Endothelial cell of umbilical vein (primary cell): ENCODE measurements at regions of chr10 and their contacts with region 1.

Region 1: GRCh38 chr10:114550756-114551635 is 107.1 kb downstream of the ABLIM1 start:
- DNase-seq: peak; percentile 93
- H3K4me3 ChIP-seq: no peak overlapping the region
- H3K27ac ChIP-seq: no peak overlapping the region
- H3K4me1 ChIP-seq: peaks cover 11% of the 10 kb centered on the region
- H3K27me3 ChIP-seq: no peaks in the 10 kb centered on the region
- CTCF ChIP-seq: peak in 1 of 2 donors; percentile 15
- POLR2A ChIP-seq: no peak

Region 2: DNA sequence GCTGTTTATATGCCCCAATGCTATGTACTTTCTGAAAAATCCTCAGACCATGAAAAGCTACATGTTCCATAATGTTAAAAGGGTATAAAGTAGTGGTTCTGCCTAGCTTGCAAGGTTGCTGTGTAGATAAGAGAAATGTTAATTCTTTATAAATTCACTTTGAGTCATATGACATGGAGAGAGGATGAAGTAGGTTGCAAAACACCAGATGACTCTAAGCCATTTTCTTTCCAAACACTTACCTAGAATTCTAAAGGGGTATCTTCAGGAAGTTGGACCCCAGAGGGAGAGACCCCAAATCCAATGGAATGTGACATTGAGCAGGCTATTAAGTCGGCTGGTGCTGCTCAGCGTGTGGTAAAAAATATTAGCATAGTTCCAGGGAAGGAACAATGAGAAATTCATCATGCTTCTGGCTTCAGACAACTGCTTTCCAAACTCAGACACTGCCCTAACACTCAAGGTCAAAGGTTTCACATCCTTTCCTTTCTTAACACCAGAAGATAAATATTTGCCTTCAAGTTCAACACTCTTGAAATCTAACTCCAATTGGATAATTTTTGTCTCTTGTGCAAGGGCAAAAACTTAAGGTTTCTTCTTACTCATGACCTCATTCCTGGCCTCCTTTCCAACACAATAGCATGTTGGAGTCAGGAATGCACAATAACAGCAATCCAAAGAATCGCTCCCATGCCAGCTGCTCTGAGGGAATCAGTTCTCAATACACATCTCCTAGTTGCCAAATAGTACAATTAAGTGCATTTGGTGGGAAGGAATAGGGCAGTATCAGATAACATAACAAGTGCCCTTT is 46.0 kb before region 1 on chr10:
- CTCF ChIA-PET with region 1: no interaction called
- POLR2A ChIA-PET with region 1: no interaction called
- dilution Hi-C with region 1: no loop called
- intact Hi-C with region 1: loop called (anchors 2 kb)
- DNase-seq: peak; percentile 99
- H3K4me3 ChIP-seq: no peak overlapping the region
- H3K27ac ChIP-seq: peak overlapping the region; percentile 76
- H3K4me1 ChIP-seq: peaks cover 48% of the 10 kb centered on the region
- H3K27me3 ChIP-seq: no peaks in the 10 kb centered on the region
- CTCF ChIP-seq: no peak
- POLR2A ChIP-seq: no peak

Region 3: GRCh38 chr10:114615600-114616007 is 64.6 kb after region 1 on chr10:
- CTCF ChIA-PET with region 1: no interaction called
- POLR2A ChIA-PET with region 1: no interaction called
- dilution Hi-C with region 1: no loop called
- intact Hi-C with region 1: no loop called
- DNase-seq: no peak
- H3K4me3 ChIP-seq: no peak overlapping the region
- H3K27ac ChIP-seq: no peak overlapping the region
- H3K4me1 ChIP-seq: no peaks in the 10 kb centered on the region
- H3K27me3 ChIP-seq: no peaks in the 10 kb centered on the region
- CTCF ChIP-seq: no peak
- POLR2A ChIP-seq: no peak

Region 4: GRCh38 chr10:114631666-114632417 is 80.8 kb after region 1 on chr10:
- CTCF ChIA-PET with region 1: interaction called, 7 read pairs
- POLR2A ChIA-PET with region 1: no interaction called
- dilution Hi-C with region 1: no loop called
- intact Hi-C with region 1: loop called (anchors 2 kb)
- DNase-seq: peak; percentile 60
- H3K4me3 ChIP-seq: peak overlapping the region; percentile 56 to 75 (median 71)
- H3K27ac ChIP-seq: no peak overlapping the region
- H3K4me1 ChIP-seq: peaks cover 39% of the 10 kb centered on the region
- H3K27me3 ChIP-seq: no peaks in the 10 kb centered on the region
- CTCF ChIP-seq: no peak
- POLR2A ChIP-seq: no peak

Region 5: GRCh38 chr10:114703377-114704107 is 152.5 kb after region 1 on chr10:
- CTCF ChIA-PET with region 1: interaction called, 64 read pairs
- POLR2A ChIA-PET with region 1: no interaction called
- dilution Hi-C with region 1: loop called (anchors 25 kb)
- intact Hi-C with region 1: loop called (anchors 1 kb)
- DNase-seq: peak; percentile 69
- H3K4me3 ChIP-seq: no peak overlapping the region
- H3K27ac ChIP-seq: no peak overlapping the region
- H3K4me1 ChIP-seq: peaks cover under 1% of the 10 kb centered on the region
- H3K27me3 ChIP-seq: no peaks in the 10 kb centered on the region
- CTCF ChIP-seq: peak; percentile 63 to 67
- POLR2A ChIP-seq: no peak

Region 6: DNA sequence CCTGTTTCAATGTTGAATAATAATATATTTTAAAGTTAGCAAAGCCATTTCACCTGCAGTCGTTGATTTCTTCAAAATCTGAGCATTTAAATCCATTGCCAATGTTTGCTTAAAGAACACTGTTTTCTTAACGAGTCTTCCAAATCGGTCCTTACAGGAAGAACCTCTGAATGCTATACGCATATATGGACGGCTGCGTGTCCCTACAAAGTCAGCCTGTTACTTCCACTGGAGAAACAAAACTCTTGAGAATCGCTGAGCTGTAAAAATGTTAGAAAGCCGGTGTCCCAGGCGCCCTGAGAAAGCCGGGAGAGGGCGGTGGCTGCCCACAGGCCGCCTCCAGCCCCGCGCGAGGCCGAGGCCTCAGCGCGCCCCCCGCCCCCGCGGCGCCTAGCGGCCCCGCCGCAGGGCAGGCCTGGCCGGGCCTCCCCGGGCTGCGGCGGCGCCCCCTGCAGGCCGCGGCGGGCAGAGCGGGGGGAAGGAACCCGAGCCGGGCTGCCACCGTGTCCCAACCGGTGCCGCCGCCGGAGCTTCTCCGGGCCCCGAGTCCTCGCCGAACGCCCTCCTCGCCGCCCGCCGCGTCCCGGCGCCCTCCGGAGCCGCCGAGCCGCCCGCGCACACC is 270.4 kb after region 1 on chr10 and contains the start of gene FHIP2A:
- CTCF ChIA-PET with region 1: interaction called, 21 read pairs
- POLR2A ChIA-PET with region 1: no interaction called
- dilution Hi-C with region 1: no loop called
- intact Hi-C with region 1: loop called (anchors 1 kb)
- DNase-seq: peak; percentile 74
- H3K4me3 ChIP-seq: peak within 1 kb of the TSS; percentile 78 to 96 (median 86)
- H3K27ac ChIP-seq: peak within 1 kb of the TSS; percentile 97
- H3K4me1 ChIP-seq: peaks cover 35% of the 10 kb centered on the region
- H3K27me3 ChIP-seq: no peaks in the 10 kb centered on the region
- CTCF ChIP-seq: peak; percentile 53 to 60
- POLR2A ChIP-seq: peak; percentile 61
- total RNA-seq, gene FHIP2A: 34.8 and 39.6 TPM in 2 replicates

Region 7: GRCh38 chr10:114869520-114869892 is 318.5 kb after region 1 on chr10:
- CTCF ChIA-PET with region 1: no interaction called
- POLR2A ChIA-PET with region 1: no interaction called
- dilution Hi-C with region 1: no loop called
- intact Hi-C with region 1: no loop called
- DNase-seq: peak; percentile 93
- H3K4me3 ChIP-seq: no peak overlapping the region
- H3K27ac ChIP-seq: peak overlapping the region; percentile 79
- H3K4me1 ChIP-seq: peaks cover 23% of the 10 kb centered on the region
- H3K27me3 ChIP-seq: no peaks in the 10 kb centered on the region
- CTCF ChIP-seq: no peak
- POLR2A ChIP-seq: no peak

Region 8: GRCh38 chr10:114905450-114905849 is 354.5 kb after region 1 on chr10:
- CTCF ChIA-PET with region 1: no interaction called
- POLR2A ChIA-PET with region 1: no interaction called
- dilution Hi-C with region 1: no loop called
- intact Hi-C with region 1: no loop called
- DNase-seq: no peak
- H3K4me3 ChIP-seq: no peak overlapping the region
- H3K27ac ChIP-seq: no peak overlapping the region
- H3K4me1 ChIP-seq: no peaks in the 10 kb centered on the region
- H3K27me3 ChIP-seq: peaks cover 4 to 12% of the 10 kb centered on the region in 2 experiments
- CTCF ChIP-seq: no peak
- POLR2A ChIP-seq: no peak

Region 9: DNA sequence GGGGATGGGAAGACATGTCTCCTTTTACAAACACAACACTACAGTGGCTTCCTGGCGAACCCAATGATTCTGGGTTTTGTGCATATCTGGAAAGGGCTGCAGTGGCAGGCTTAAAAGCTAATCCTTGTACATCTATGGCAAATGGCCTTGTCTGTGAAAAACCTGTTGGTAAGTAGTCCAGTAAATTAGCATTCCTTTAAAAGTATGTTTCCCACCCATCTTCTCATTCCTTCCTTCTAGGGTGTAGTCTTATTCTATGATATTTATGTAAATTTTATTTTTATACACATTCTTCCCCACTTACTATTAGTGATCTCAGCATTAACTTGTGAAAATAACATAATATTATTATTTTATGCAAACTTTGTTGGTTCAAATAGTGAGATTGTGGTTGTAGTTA is 749.1 kb after region 1 on chr10:
- CTCF ChIA-PET with region 1: no interaction called
- POLR2A ChIA-PET with region 1: no interaction called
- dilution Hi-C with region 1: no loop called
- intact Hi-C with region 1: no loop called
- DNase-seq: no peak
- H3K4me3 ChIP-seq: no peak overlapping the region
- H3K27ac ChIP-seq: no peak overlapping the region
- H3K4me1 ChIP-seq: no peaks in the 10 kb centered on the region
- H3K27me3 ChIP-seq: no peaks in the 10 kb centered on the region
- CTCF ChIP-seq: no peak
- POLR2A ChIP-seq: no peak